CD4-positive, alpha-beta T cell (primary cell): ENCODE measurements at regions of chr1 and their contacts with region 1.

Region 1: DNA sequence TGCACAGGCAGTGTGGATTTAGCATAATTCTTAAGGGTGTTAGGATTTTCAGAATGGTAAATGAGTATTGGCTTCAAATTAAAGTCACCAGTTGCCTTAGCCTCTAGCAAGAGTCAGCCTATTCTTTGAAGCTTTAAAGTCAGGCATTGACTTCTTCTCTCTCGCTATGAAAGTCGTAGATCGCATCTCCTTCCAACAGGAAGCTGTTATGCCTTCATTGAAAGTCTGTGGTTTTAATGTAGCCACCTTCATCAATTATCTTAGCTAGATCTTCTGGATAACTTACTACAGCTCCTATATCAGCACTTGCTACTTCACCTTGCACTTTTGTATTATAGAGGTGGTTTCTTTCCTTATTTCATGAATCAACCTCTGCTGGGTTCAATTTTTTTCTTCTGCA is 320.2 kb downstream of the PTPRC start:
- DNase-seq: peak in 3 of 14 experiments; percentile 23 to 38 (median 26)
- ATAC-seq: peak; percentile 76
- H3K4me3 ChIP-seq: no peak overlapping the region
- H3K4me3 Mint-ChIP-seq: no peak overlapping the region
- H3K27ac ChIP-seq: no peak overlapping the region
- H3K27ac Mint-ChIP-seq: peak overlapping the region; percentile 2
- H3K4me1 ChIP-seq: no peaks in the 10 kb centered on the region
- H3K4me1 Mint-ChIP-seq: peaks cover 38% of the 10 kb centered on the region
- H3K27me3 ChIP-seq: no peaks in the 10 kb centered on the region
- H3K27me3 Mint-ChIP-seq: no peaks in the 10 kb centered on the region
- CTCF ChIP-seq: no peak

Region 2: DNA sequence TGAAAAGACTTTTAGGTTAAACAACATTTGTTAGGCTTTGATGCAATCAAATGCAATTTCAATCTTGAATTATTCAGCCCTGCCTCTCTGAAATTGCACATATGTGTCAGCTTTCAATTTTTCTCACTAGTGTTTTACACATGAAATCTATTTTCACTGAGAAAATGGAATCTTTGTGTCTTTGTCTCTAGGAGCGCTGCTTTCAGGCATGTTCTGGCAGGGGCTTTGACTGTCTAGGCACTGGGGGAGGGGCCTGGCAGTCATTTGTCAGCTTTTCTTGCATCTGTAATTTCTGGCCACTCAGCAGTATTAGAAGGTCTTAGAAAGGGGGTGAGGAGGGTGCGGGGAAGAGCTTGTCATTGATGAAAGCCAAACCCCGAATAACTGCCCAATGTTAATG is 55.8 kb before region 1 on chr1:
- CTCF ChIA-PET with region 1: no interaction called
- POLR2A ChIA-PET with region 1: no interaction called
- intact Hi-C with region 1: loop called in 1 of 2 experiments (anchors 10 kb)
- DNase-seq: no peak
- ATAC-seq: no peak
- H3K4me3 ChIP-seq: no peak overlapping the region
- H3K4me3 Mint-ChIP-seq: no peak overlapping the region
- H3K27ac ChIP-seq: no peak overlapping the region
- H3K27ac Mint-ChIP-seq: no peak overlapping the region
- H3K4me1 ChIP-seq: no peaks in the 10 kb centered on the region
- H3K4me1 Mint-ChIP-seq: peaks cover 28% of the 10 kb centered on the region
- H3K27me3 ChIP-seq: no peaks in the 10 kb centered on the region
- H3K27me3 Mint-ChIP-seq: no peaks in the 10 kb centered on the region
- CTCF ChIP-seq: no peak